B cell (primary cell): ENCODE measurements at regions of chr5 and their contacts with region 1.

Region 1: GRCh38 chr5:151051066-151051930 is 29.5 kb downstream of the TNIP1 start:
- DNase-seq: peak; percentile 86
- ATAC-seq: peak; percentile 90
- H3K4me3 ChIP-seq: no peak overlapping the region
- H3K4me3 Mint-ChIP-seq: no peak overlapping the region
- H3K27ac ChIP-seq: no peak overlapping the region
- H3K27ac Mint-ChIP-seq: peak overlapping the region; percentile 66
- H3K4me1 ChIP-seq: peaks cover 15 to 22% of the 10 kb centered on the region in 2 donors
- H3K4me1 Mint-ChIP-seq: peaks cover 27% of the 10 kb centered on the region
- H3K27me3 ChIP-seq: no peaks in the 10 kb centered on the region
- H3K27me3 Mint-ChIP-seq: no peaks in the 10 kb centered on the region
- CTCF ChIP-seq: peak; percentile 84

Region 2: DNA sequence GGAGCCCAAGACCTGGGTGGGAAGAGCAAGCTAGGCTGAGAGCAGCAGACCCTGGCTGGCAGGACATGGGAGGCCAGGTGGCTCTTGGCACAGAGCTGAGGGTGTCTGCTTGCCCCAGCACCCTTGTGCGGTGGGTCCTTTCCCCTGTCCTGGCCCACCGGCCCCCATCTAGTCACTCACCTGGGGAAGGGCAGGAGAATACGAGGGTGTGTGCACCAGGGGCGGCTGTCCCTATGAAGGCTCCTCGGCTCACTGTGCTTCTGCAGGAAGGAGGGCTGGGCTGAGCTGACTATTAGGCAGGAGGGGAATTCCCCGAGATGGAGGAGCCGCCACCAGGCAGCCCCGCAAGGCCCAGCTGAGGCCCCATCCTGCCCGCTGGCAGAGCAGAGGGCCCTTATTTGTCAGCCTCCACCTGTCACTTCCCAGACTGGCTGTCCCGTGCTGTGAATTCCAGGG is 35.6 kb after region 1 on chr5:
- CTCF ChIA-PET with region 1: interaction called, 19 read pairs
- POLR2A ChIA-PET with region 1: no interaction called
- intact Hi-C with region 1: no loop called
- DNase-seq: peak; percentile 80
- ATAC-seq: peak; percentile 92
- H3K4me3 ChIP-seq: peak overlapping the region in 4 of 5 experiments; percentile 7 to 47 (median 34)
- H3K4me3 Mint-ChIP-seq: peak overlapping the region; percentile 69
- H3K27ac ChIP-seq: peak overlapping the region; percentile 14 to 69
- H3K27ac Mint-ChIP-seq: peak overlapping the region; percentile 38
- H3K4me1 ChIP-seq: peaks cover 53 to 54% of the 10 kb centered on the region in 2 donors
- H3K4me1 Mint-ChIP-seq: peaks cover 58% of the 10 kb centered on the region
- H3K27me3 ChIP-seq: no peaks in the 10 kb centered on the region
- H3K27me3 Mint-ChIP-seq: no peaks in the 10 kb centered on the region
- CTCF ChIP-seq: no peak

Region 3: GRCh38 chr5:151115274-151115905 is 64.1 kb after region 1 on chr5:
- CTCF ChIA-PET with region 1: interaction called, 918 read pairs
- POLR2A ChIA-PET with region 1: interaction called, 11 read pairs
- intact Hi-C with region 1: loop called (anchors 1 kb)
- DNase-seq: peak; percentile 78
- ATAC-seq: peak; percentile 88
- H3K4me3 ChIP-seq: no peak overlapping the region
- H3K4me3 Mint-ChIP-seq: no peak overlapping the region
- H3K27ac ChIP-seq: peak overlapping the region in 1 of 2 donors; percentile 51
- H3K27ac Mint-ChIP-seq: peak overlapping the region; percentile 56
- H3K4me1 ChIP-seq: peaks cover 4 to 11% of the 10 kb centered on the region in 2 donors
- H3K4me1 Mint-ChIP-seq: peaks cover 23% of the 10 kb centered on the region
- H3K27me3 ChIP-seq: no peaks in the 10 kb centered on the region
- H3K27me3 Mint-ChIP-seq: no peaks in the 10 kb centered on the region
- CTCF ChIP-seq: peak; percentile 98

Region 4: GRCh38 chr5:151150471-151151262 is 99.4 kb after region 1 on chr5:
- CTCF ChIA-PET with region 1: interaction called, 39 read pairs
- POLR2A ChIA-PET with region 1: no interaction called
- intact Hi-C with region 1: no loop called
- DNase-seq: peak; percentile 61
- ATAC-seq: peak; percentile 69
- H3K4me3 ChIP-seq: peak overlapping the region in 3 of 5 experiments; percentile 9 to 22 (median 18)
- H3K4me3 Mint-ChIP-seq: peak overlapping the region; percentile 69
- H3K27ac ChIP-seq: peak overlapping the region; percentile 74 to 91
- H3K27ac Mint-ChIP-seq: peak overlapping the region; percentile 93
- H3K4me1 ChIP-seq: peaks cover 100% of the 10 kb centered on the region in 2 donors
- H3K4me1 Mint-ChIP-seq: peaks cover 97% of the 10 kb centered on the region
- H3K27me3 ChIP-seq: no peaks in the 10 kb centered on the region
- H3K27me3 Mint-ChIP-seq: no peaks in the 10 kb centered on the region
- CTCF ChIP-seq: no peak

Region 5: GRCh38 chr5:151239237-151239861 is 188.1 kb after region 1 on chr5:
- CTCF ChIA-PET with region 1: interaction called, 60 read pairs
- POLR2A ChIA-PET with region 1: no interaction called
- intact Hi-C with region 1: loop called (anchors 1 kb)
- DNase-seq: peak; percentile 66
- ATAC-seq: peak; percentile 64
- H3K4me3 ChIP-seq: peak overlapping the region in 2 of 5 experiments; percentile 7 to 20
- H3K4me3 Mint-ChIP-seq: peak overlapping the region; percentile 84
- H3K27ac ChIP-seq: no peak overlapping the region
- H3K27ac Mint-ChIP-seq: peak overlapping the region; percentile 82
- H3K4me1 ChIP-seq: peaks cover 81 to 82% of the 10 kb centered on the region in 2 donors
- H3K4me1 Mint-ChIP-seq: peaks cover 95% of the 10 kb centered on the region
- H3K27me3 ChIP-seq: no peaks in the 10 kb centered on the region
- H3K27me3 Mint-ChIP-seq: no peaks in the 10 kb centered on the region
- CTCF ChIP-seq: peak; percentile 99

Region 6: DNA sequence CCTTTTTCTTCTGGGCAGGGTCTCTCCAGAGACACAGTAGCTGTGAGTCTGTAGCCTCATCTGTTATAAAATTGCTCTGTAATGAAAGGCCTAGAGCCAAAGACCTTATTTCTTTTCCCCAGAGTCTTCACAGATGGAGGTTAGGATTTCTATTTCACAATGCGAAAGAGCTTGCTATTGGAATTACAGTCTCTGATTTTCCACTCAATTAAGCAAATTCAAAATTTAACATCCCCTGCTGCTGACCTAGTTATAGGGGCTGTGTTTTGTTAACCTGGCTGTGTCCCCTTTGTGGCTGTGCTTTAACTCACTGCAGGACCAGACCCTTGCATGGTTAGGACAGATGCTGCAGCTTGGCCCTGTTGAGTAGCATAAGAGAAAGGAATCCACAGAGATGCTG is 1544.1 kb after region 1 on chr5:
- CTCF ChIA-PET with region 1: no interaction called
- POLR2A ChIA-PET with region 1: no interaction called
- intact Hi-C with region 1: no loop called
- DNase-seq: no peak
- ATAC-seq: no peak
- H3K4me3 ChIP-seq: no peak overlapping the region
- H3K4me3 Mint-ChIP-seq: no peak overlapping the region
- H3K27ac ChIP-seq: no peak overlapping the region
- H3K27ac Mint-ChIP-seq: no peak overlapping the region
- H3K4me1 ChIP-seq: no peaks in the 10 kb centered on the region
- H3K4me1 Mint-ChIP-seq: no peaks in the 10 kb centered on the region
- H3K27me3 ChIP-seq: no peaks in the 10 kb centered on the region
- H3K27me3 Mint-ChIP-seq: no peaks in the 10 kb centered on the region
- CTCF ChIP-seq: no peak